Heart right ventricle (tissue), 16 donors: ENCODE measurements at regions of chr10 and their contacts with region 1.

Region 1: GRCh38 chr10:99711129-99711719 is 20.7 kb downstream of the COX15 start:
- DNase-seq: peak in 1 of 2 donors; percentile 23
- ATAC-seq: peak in 4 of 8 donors; percentile 63 to 80 (median 71)
- H3K4me3 ChIP-seq: no peak overlapping the region
- H3K27ac ChIP-seq: no peak overlapping the region
- H3K4me1 ChIP-seq: no peaks in the 10 kb centered on the region
- H3K27me3 ChIP-seq: no peaks in the 10 kb centered on the region
- CTCF ChIP-seq: peak in 8 of 9 donors; percentile 7 to 59 (median 54)

Region 2: GRCh38 chr10:99395750-99396445 is 315.3 kb before region 1 on chr10:
- intact Hi-C with region 1: loop called in 1 of 10 experiments (anchors 5 kb)
- DNase-seq: no peak
- ATAC-seq: peak in 3 of 8 donors; percentile 47 to 50 (median 48)
- H3K4me3 ChIP-seq: no peak overlapping the region
- H3K27ac ChIP-seq: peak overlapping the region in 1 of 10 donors; percentile 15
- H3K4me1 ChIP-seq: peaks cover 0 to 53% (median 21%) of the 10 kb centered on the region in 9 donors
- H3K27me3 ChIP-seq: no peaks in the 10 kb centered on the region
- CTCF ChIP-seq: no peak

Region 3: GRCh38 chr10:99430451-99431189 is 280.6 kb before region 1 on chr10 and contains the start of gene GOT1:
- intact Hi-C with region 1: loop called in 3 of 10 experiments (anchors 5 to 10 kb)
- DNase-seq: peak; percentile 91 to 98
- ATAC-seq: peak; percentile 95 to 97 (median 97)
- H3K4me3 ChIP-seq: peak within 1 kb of the TSS; percentile 68 to 96 (median 86)
- H3K27ac ChIP-seq: peak within 1 kb of the TSS; percentile 90 to 99 (median 96)
- H3K4me1 ChIP-seq: peaks cover 0 to 76% (median 36%) of the 10 kb centered on the region in 9 donors
- H3K27me3 ChIP-seq: no peaks in the 10 kb centered on the region
- CTCF ChIP-seq: no peak
- total RNA-seq, gene GOT1: 362 to 669 (median 586) TPM

Region 4: GRCh38 chr10:99435986-99436638 is 275.1 kb before region 1 on chr10:
- intact Hi-C with region 1: loop called in 5 of 10 experiments (anchors 5 to 10 kb)
- DNase-seq: no peak
- ATAC-seq: peak in 4 of 8 donors; percentile 19 to 40 (median 34)
- H3K4me3 ChIP-seq: no peak overlapping the region
- H3K27ac ChIP-seq: peak overlapping the region in 1 of 10 donors; percentile 11
- H3K4me1 ChIP-seq: peaks cover 0 to 59% (median 25%) of the 10 kb centered on the region in 9 donors
- H3K27me3 ChIP-seq: no peaks in the 10 kb centered on the region
- CTCF ChIP-seq: peak; percentile 39 to 72 (median 61)

Region 5: GRCh38 chr10:99444383-99445045 is 266.7 kb before region 1 on chr10:
- intact Hi-C with region 1: loop called in 5 of 10 experiments (anchors 5 to 10 kb)
- DNase-seq: no peak
- ATAC-seq: no peak
- H3K4me3 ChIP-seq: no peak overlapping the region
- H3K27ac ChIP-seq: no peak overlapping the region
- H3K4me1 ChIP-seq: no peaks in the 10 kb centered on the region
- H3K27me3 ChIP-seq: peaks cover 0 to 21% (median 6%) of the 10 kb centered on the region in 7 donors
- CTCF ChIP-seq: no peak

Region 6: GRCh38 chr10:99560277-99561126 is 150.7 kb before region 1 on chr10:
- intact Hi-C with region 1: loop called in 1 of 10 experiments (anchors 5 kb)
- DNase-seq: peak in 1 of 2 donors; percentile 22
- ATAC-seq: no peak
- H3K4me3 ChIP-seq: no peak overlapping the region
- H3K27ac ChIP-seq: no peak overlapping the region
- H3K4me1 ChIP-seq: no peaks in the 10 kb centered on the region
- H3K27me3 ChIP-seq: peaks cover 0 to 58% (median 46%) of the 10 kb centered on the region in 7 donors
- CTCF ChIP-seq: peak; percentile 55 to 81 (median 66)

Region 7: GRCh38 chr10:99620713-99621453 is 90.3 kb before region 1 on chr10:
- intact Hi-C with region 1: loop called in 2 of 10 experiments (anchors 10 kb)
- DNase-seq: peak; percentile 92
- ATAC-seq: peak; percentile 90 to 96 (median 94)
- H3K4me3 ChIP-seq: peak overlapping the region; percentile 53 to 95 (median 92)
- H3K27ac ChIP-seq: peak overlapping the region; percentile 93 to 100 (median 98)
- H3K4me1 ChIP-seq: peaks cover 6 to 48% (median 45%) of the 10 kb centered on the region in 9 donors
- H3K27me3 ChIP-seq: no peaks in the 10 kb centered on the region
- CTCF ChIP-seq: peak in 2 of 9 donors; percentile 4 to 16

Region 8: DNA sequence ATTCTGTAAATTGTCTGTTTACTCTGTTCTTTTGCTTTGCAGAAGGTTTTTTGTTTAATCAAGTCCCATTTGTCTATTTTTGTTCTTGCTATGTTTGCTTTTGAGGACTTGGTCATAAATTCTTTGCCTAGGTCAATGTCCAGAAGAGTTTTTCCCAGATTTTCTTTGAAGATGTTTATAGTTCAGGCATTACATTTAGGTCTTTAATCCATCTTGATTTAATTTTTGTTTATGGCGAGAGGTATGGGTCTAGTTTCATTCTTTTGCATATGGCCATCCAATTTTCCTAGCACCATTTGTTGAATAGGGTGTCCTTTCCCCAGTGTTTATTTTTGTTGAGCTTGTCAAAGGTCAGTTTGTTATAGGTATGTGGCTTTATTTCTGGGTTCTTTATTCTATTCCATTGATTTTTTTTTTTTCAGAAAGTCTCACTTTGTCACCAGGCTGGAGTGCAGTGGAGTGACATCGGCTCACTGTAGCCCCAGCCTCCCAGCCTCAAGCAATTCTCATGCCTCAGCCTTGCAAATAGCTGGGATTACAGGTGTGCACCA is 63.5 kb before region 1 on chr10:
- intact Hi-C with region 1: no loop called
- DNase-seq: no peak
- ATAC-seq: no peak
- H3K4me3 ChIP-seq: no peak overlapping the region
- H3K27ac ChIP-seq: no peak overlapping the region
- H3K4me1 ChIP-seq: no peaks in the 10 kb centered on the region
- H3K27me3 ChIP-seq: no peaks in the 10 kb centered on the region
- CTCF ChIP-seq: no peak